B cell (primary cell): ENCODE measurements at regions of chr15 and their contacts with region 1.

Region 1: DNA sequence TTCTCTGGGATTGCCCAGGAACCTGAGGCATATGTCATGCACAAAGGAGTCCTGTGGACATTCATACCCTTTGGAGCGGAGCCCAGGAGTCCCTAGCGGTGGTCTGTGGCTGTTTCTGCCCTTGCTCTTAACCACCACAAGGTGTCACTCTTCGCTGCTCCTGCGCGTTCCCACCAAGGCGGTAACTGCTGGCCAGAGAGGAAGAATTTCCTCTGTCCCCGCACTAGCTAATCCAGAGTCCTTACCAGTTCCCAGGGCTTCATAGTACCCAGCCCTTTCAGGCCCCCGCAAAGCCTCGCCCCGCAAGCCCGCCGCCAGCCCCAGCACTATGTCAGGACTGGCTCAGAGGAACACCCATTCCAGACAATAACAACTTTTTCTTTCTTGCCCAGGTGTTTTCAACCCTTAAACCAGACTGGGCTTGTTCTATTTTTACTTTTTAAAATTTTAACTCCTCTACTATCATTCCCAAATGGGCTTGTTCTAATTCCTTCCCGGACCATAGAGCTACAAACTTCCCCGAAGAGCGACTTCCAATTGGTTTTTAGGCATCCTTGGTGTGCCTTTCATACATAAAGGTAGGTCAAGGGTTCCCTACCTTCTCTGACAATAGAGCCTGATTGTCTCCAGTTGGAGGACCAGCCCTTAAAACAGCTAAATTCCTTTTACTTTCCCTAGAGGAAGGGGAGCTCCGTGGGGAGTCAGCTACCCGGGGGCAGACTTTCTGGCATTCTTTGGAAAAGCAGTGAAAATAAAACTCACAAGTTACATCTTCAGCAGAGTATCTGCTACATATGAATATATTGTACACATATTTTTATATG is 31.8 kb upstream of the ZNF774 start:
- DNase-seq: peak; percentile 84
- ATAC-seq: peak; percentile 98
- H3K4me3 ChIP-seq: peak overlapping the region in 1 of 5 experiments; percentile 9
- H3K4me3 Mint-ChIP-seq: peak overlapping the region; percentile 2
- H3K27ac ChIP-seq: no peak overlapping the region
- H3K27ac Mint-ChIP-seq: no peak overlapping the region
- H3K4me1 ChIP-seq: peaks cover 3 to 7% of the 10 kb centered on the region in 2 donors
- H3K4me1 Mint-ChIP-seq: peaks cover 5% of the 10 kb centered on the region
- H3K27me3 ChIP-seq: no peaks in the 10 kb centered on the region
- H3K27me3 Mint-ChIP-seq: no peaks in the 10 kb centered on the region
- CTCF ChIP-seq: peak; percentile 95

Region 2: GRCh38 chr15:90174140-90174875 is 146.0 kb before region 1 on chr15:
- CTCF ChIA-PET with region 1: no interaction called
- POLR2A ChIA-PET with region 1: no interaction called
- intact Hi-C with region 1: no loop called
- DNase-seq: no peak
- ATAC-seq: no peak
- H3K4me3 ChIP-seq: no peak overlapping the region
- H3K4me3 Mint-ChIP-seq: no peak overlapping the region
- H3K27ac ChIP-seq: no peak overlapping the region
- H3K27ac Mint-ChIP-seq: no peak overlapping the region
- H3K4me1 ChIP-seq: peaks cover 16 to 20% of the 10 kb centered on the region in 2 donors
- H3K4me1 Mint-ChIP-seq: peaks cover 19% of the 10 kb centered on the region
- H3K27me3 ChIP-seq: no peaks in the 10 kb centered on the region
- H3K27me3 Mint-ChIP-seq: no peaks in the 10 kb centered on the region
- CTCF ChIP-seq: no peak

Region 3: DNA sequence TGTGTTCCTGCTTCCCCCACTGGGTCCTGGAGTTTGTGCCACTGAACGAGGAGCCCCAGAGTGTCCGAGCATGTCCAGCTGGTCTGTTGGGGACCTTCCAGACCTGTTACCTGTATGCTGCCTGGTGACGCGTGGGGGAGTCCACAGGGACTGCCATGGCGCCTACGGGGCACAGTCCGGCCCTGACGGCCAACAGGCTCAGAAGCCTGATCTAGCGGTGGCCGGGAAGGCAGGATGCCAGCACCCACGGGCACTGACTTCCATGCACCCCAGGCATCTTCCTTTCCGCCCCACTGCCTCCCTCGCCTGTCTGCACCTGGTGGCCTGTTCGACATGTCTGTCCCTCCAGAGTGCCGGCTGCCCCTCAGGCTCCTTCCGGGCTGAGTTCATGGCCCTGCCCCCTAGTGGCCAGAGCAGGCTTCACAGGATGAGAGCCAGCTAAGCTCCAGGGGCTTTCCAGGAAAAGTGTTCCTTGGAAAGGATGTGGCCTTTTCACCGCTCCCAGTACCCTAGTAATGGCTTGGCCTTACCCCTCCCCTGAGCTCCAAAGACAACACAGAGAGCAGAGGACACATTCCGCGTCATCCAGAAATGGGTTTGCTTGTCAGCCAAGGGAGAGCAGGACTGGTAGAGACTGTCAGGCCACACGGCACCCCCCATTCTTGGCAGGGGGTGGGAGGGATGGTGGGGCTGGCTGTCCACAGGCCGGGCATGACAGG is 19.1 kb before region 1 on chr15:
- CTCF ChIA-PET with region 1: interaction called, 48 read pairs
- POLR2A ChIA-PET with region 1: no interaction called
- intact Hi-C with region 1: no loop called
- DNase-seq: peak; percentile 73
- ATAC-seq: peak; percentile 36
- H3K4me3 ChIP-seq: no peak overlapping the region
- H3K4me3 Mint-ChIP-seq: no peak overlapping the region
- H3K27ac ChIP-seq: no peak overlapping the region
- H3K27ac Mint-ChIP-seq: no peak overlapping the region
- H3K4me1 ChIP-seq: peaks cover 3 to 5% of the 10 kb centered on the region in 2 donors
- H3K4me1 Mint-ChIP-seq: peaks cover 5% of the 10 kb centered on the region
- H3K27me3 ChIP-seq: no peaks in the 10 kb centered on the region
- H3K27me3 Mint-ChIP-seq: no peaks in the 10 kb centered on the region
- CTCF ChIP-seq: peak; percentile 80

Region 4: GRCh38 chr15:90336705-90337141 is 16.4 kb after region 1 on chr15:
- CTCF ChIA-PET with region 1: interaction called, 16 read pairs
- POLR2A ChIA-PET with region 1: no interaction called
- intact Hi-C with region 1: no loop called
- DNase-seq: peak; percentile 32
- ATAC-seq: no peak
- H3K4me3 ChIP-seq: no peak overlapping the region
- H3K4me3 Mint-ChIP-seq: no peak overlapping the region
- H3K27ac ChIP-seq: no peak overlapping the region
- H3K27ac Mint-ChIP-seq: no peak overlapping the region
- H3K4me1 ChIP-seq: peaks cover 8 to 9% of the 10 kb centered on the region in 2 donors
- H3K4me1 Mint-ChIP-seq: peaks cover 8% of the 10 kb centered on the region
- H3K27me3 ChIP-seq: no peaks in the 10 kb centered on the region
- H3K27me3 Mint-ChIP-seq: no peaks in the 10 kb centered on the region
- CTCF ChIP-seq: no peak

Region 5: GRCh38 chr15:90442423-90442822 is 122.2 kb after region 1 on chr15:
- CTCF ChIA-PET with region 1: interaction called, 11 read pairs
- POLR2A ChIA-PET with region 1: no interaction called
- intact Hi-C with region 1: no loop called
- DNase-seq: no peak
- ATAC-seq: no peak
- H3K4me3 ChIP-seq: no peak overlapping the region
- H3K4me3 Mint-ChIP-seq: no peak overlapping the region
- H3K27ac ChIP-seq: no peak overlapping the region
- H3K27ac Mint-ChIP-seq: no peak overlapping the region
- H3K4me1 ChIP-seq: no peaks in the 10 kb centered on the region
- H3K4me1 Mint-ChIP-seq: no peaks in the 10 kb centered on the region
- H3K27me3 ChIP-seq: no peaks in the 10 kb centered on the region
- H3K27me3 Mint-ChIP-seq: no peaks in the 10 kb centered on the region
- CTCF ChIP-seq: no peak

Region 6: DNA sequence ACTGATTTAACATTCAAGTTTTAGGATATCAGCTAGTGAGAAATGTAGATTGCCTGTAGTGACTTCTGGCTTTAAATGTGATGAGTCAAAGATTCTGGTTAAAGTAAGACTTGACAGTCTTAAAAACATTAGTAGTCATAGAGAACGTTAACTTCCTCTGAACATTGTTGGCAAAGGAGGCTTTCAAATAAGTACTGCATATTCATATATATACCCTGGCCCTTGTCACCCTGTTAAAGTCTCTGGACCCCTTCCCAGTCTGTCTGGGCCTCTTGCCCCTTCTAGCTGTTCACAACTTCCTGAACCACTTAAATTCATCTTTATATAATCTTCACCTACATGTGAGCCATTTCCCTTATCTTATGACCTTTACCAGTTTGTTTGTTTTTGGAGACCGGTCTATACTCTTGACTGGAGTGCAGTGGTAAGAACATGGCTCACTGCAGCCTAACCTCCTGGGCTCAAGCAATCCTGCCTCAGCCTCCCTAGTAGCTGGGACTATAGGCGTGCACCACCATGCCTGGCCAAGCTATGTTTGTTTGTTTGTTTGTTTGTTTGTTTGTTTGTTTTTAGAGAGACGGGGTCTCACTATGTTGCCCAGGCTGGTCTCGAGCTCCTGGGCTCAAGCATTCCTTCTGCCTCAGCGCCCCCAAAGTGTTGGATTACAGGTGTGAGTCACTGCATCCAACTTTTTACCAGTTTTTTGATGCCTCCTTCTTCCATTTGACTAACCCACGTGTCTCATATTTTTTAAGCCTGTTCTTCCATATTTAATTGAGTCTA is 145.1 kb after region 1 on chr15:
- CTCF ChIA-PET with region 1: interaction called, 10 read pairs
- POLR2A ChIA-PET with region 1: no interaction called
- intact Hi-C with region 1: no loop called
- DNase-seq: no peak
- ATAC-seq: no peak
- H3K4me3 ChIP-seq: no peak overlapping the region
- H3K4me3 Mint-ChIP-seq: no peak overlapping the region
- H3K27ac ChIP-seq: no peak overlapping the region
- H3K27ac Mint-ChIP-seq: no peak overlapping the region
- H3K4me1 ChIP-seq: no peaks in the 10 kb centered on the region
- H3K4me1 Mint-ChIP-seq: no peaks in the 10 kb centered on the region
- H3K27me3 ChIP-seq: no peaks in the 10 kb centered on the region
- H3K27me3 Mint-ChIP-seq: no peaks in the 10 kb centered on the region
- CTCF ChIP-seq: no peak

Region 7: GRCh38 chr15:90598031-90598577 is 277.8 kb after region 1 on chr15:
- CTCF ChIA-PET with region 1: interaction called, 16 read pairs
- POLR2A ChIA-PET with region 1: no interaction called
- intact Hi-C with region 1: no loop called
- DNase-seq: peak; percentile 53
- ATAC-seq: no peak
- H3K4me3 ChIP-seq: peak overlapping the region in 1 of 5 experiments; percentile 39
- H3K4me3 Mint-ChIP-seq: peak overlapping the region; percentile 74
- H3K27ac ChIP-seq: peak overlapping the region; percentile 69 to 77
- H3K27ac Mint-ChIP-seq: peak overlapping the region; percentile 93
- H3K4me1 ChIP-seq: peaks cover 63 to 75% of the 10 kb centered on the region in 2 donors
- H3K4me1 Mint-ChIP-seq: peaks cover 77% of the 10 kb centered on the region
- H3K27me3 ChIP-seq: no peaks in the 10 kb centered on the region
- H3K27me3 Mint-ChIP-seq: no peaks in the 10 kb centered on the region
- CTCF ChIP-seq: no peak

Region 8: GRCh38 chr15:90691982-90692773 is 371.9 kb after region 1 on chr15:
- CTCF ChIA-PET with region 1: interaction called, 4 read pairs
- POLR2A ChIA-PET with region 1: no interaction called
- intact Hi-C with region 1: loop called (anchors 1 kb)
- DNase-seq: no peak
- ATAC-seq: no peak
- H3K4me3 ChIP-seq: no peak overlapping the region
- H3K4me3 Mint-ChIP-seq: no peak overlapping the region
- H3K27ac ChIP-seq: no peak overlapping the region
- H3K27ac Mint-ChIP-seq: peak overlapping the region; percentile 7
- H3K4me1 ChIP-seq: no peaks in the 10 kb centered on the region
- H3K4me1 Mint-ChIP-seq: no peaks in the 10 kb centered on the region
- H3K27me3 ChIP-seq: no peaks in the 10 kb centered on the region
- H3K27me3 Mint-ChIP-seq: no peaks in the 10 kb centered on the region
- CTCF ChIP-seq: no peak

Region 9: GRCh38 chr15:90750186-90750585 is 429.9 kb after region 1 on chr15:
- CTCF ChIA-PET with region 1: no interaction called
- POLR2A ChIA-PET with region 1: no interaction called
- intact Hi-C with region 1: no loop called
- DNase-seq: peak; percentile 12
- ATAC-seq: no peak
- H3K4me3 ChIP-seq: no peak overlapping the region
- H3K4me3 Mint-ChIP-seq: peak overlapping the region; percentile 64
- H3K27ac ChIP-seq: no peak overlapping the region
- H3K27ac Mint-ChIP-seq: peak overlapping the region; percentile 63
- H3K4me1 ChIP-seq: no peaks in the 10 kb centered on the region
- H3K4me1 Mint-ChIP-seq: peaks cover 12% of the 10 kb centered on the region
- H3K27me3 ChIP-seq: no peaks in the 10 kb centered on the region
- H3K27me3 Mint-ChIP-seq: no peaks in the 10 kb centered on the region
- CTCF ChIP-seq: no peak